ENCODE measurements at regions of chr16 and their contacts with region 1.

Region 1: DNA sequence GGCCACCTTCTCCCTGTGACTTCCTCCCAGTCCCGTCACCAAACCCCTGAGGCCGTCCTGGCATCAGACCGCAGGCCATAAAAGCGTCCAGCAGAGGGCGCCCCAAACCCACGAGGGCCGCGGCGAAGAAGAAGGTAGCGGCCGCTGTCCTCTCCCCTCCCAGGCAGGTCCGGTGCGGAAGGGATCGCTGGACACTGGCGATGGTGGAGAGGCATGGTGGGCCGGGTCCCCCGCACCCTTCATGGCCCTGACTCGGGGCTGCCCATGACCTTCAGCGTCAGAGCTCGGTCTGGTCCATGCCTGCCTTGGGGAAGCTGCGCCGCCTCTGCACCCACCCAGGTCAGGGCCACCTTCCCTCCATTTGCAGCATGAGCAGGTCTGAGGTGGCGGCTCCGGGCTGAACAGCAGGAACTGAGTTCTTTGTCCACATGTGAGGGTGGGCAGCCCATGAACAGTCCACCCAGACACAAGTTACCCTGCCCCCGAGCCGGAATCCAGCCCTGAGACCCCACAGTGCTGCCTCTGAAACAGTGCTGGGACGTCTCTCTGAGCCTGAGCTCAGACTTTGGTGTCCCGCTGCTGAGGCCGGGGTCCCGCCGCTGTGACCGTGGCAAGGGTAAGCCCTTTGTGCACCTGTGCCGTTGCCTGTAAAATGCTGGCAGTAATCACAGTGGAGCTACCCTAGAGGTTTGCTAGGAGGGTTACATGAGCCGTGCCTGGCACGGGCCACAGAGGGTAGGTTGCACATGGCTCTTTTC is 40.8 kb upstream of the CMIP start:
- DNase-seq: peak; percentile 96
- H3K4me3 ChIP-seq: peak overlapping the region; percentile 17 to 52 (median 30)
- H3K27ac ChIP-seq: peak overlapping the region in 1 of 4 donors; percentile 19
- H3K4me1 ChIP-seq: peaks cover 9 to 18% (median 13%) of the 10 kb centered on the region in 4 donors
- H3K27me3 ChIP-seq: peaks cover 0 to 13% (median 0%) of the 10 kb centered on the region in 4 donors
- CTCF ChIP-seq: peak; percentile 93 to 99 (median 96)
- EP300 ChIP-seq: no peak
- POLR2A ChIP-seq: no peak

Region 2: GRCh38 chr16:81366316-81366932 is 37.4 kb before region 1 on chr16:
- intact Hi-C with region 1: loop called (anchors 5 kb)
- DNase-seq: no peak
- H3K4me3 ChIP-seq: no peak overlapping the region
- H3K27ac ChIP-seq: no peak overlapping the region
- H3K4me1 ChIP-seq: peaks cover 0 to 3% (median 0%) of the 10 kb centered on the region in 4 donors
- H3K27me3 ChIP-seq: no peaks in the 10 kb centered on the region
- CTCF ChIP-seq: peak; percentile 66 to 72 (median 70)
- EP300 ChIP-seq: no peak
- POLR2A ChIP-seq: no peak

Region 3: DNA sequence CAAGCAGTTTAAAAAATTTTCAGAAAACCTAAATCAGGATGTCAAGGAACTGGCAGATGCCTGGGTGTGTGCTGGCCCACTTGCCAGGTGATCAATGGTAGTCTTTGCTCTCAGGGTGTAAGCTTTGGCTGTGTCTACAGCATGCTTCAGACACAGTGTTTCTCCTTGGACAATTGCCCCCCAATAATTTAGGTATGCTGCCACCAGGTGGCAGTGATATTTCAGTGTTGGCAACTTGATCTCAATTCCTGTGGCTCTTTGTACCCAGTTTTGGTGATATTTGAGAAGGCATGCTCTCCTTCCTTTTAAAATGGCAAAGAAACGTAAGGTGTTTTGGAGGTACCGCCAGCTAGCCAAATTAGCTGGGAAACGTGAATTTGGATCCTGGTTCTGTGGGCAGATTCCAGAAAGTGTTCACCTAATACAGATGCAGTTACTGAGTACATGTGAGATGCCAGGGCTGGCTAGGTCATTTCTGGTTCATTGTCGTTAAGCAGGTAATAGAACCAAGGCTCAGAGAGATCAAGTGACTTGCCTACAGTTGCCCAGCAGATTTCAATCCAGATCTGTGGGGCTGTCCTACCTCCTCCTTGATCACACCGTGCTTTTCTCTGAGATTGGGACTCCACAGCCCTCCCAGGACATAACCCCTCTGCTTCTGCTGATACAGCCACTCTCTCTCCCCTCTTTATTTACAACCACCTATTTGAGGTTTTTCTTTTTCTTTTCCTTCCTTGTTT is 219.7 kb after region 1 on chr16:
- intact Hi-C with region 1: loop called (anchors 10 kb)
- DNase-seq: no peak
- H3K4me3 ChIP-seq: no peak overlapping the region
- H3K27ac ChIP-seq: no peak overlapping the region
- H3K4me1 ChIP-seq: peaks cover 10 to 26% (median 22%) of the 10 kb centered on the region in 4 donors
- H3K27me3 ChIP-seq: no peaks in the 10 kb centered on the region
- CTCF ChIP-seq: peak; percentile 49 to 63 (median 62)
- EP300 ChIP-seq: no peak
- POLR2A ChIP-seq: no peak

Region 4: GRCh38 chr16:81723098-81723723 is 319.4 kb after region 1 on chr16:
- intact Hi-C with region 1: loop called (anchors 1 kb)
- DNase-seq: no peak
- H3K4me3 ChIP-seq: no peak overlapping the region
- H3K27ac ChIP-seq: no peak overlapping the region
- H3K4me1 ChIP-seq: peaks cover 0 to 23% (median 15%) of the 10 kb centered on the region in 4 donors
- H3K27me3 ChIP-seq: no peaks in the 10 kb centered on the region
- CTCF ChIP-seq: peak; percentile 67 to 79 (median 72)
- EP300 ChIP-seq: no peak
- POLR2A ChIP-seq: no peak

Region 5: GRCh38 chr16:81737885-81738786 is 334.3 kb after region 1 on chr16:
- intact Hi-C with region 1: loop called (anchors 5 kb)
- DNase-seq: peak; percentile 94
- H3K4me3 ChIP-seq: peak overlapping the region; percentile 23 to 43 (median 31)
- H3K27ac ChIP-seq: peak overlapping the region in 3 of 4 donors; percentile 24 to 64 (median 52)
- H3K4me1 ChIP-seq: peaks cover 0 to 12% (median 11%) of the 10 kb centered on the region in 4 donors
- H3K27me3 ChIP-seq: no peaks in the 10 kb centered on the region
- CTCF ChIP-seq: peak; percentile 82 to 90 (median 89)
- EP300 ChIP-seq: no peak
- POLR2A ChIP-seq: no peak

Measured in esophagus muscularis mucosa (tissue), 4 donors.